Activated CD4-positive, alpha-beta T cell treated with anti-CD3 and anti-CD28 coated beads for 36 hours (primary cell): ENCODE measurements at regions of chr1 and their contacts with region 1.

Region 1: DNA sequence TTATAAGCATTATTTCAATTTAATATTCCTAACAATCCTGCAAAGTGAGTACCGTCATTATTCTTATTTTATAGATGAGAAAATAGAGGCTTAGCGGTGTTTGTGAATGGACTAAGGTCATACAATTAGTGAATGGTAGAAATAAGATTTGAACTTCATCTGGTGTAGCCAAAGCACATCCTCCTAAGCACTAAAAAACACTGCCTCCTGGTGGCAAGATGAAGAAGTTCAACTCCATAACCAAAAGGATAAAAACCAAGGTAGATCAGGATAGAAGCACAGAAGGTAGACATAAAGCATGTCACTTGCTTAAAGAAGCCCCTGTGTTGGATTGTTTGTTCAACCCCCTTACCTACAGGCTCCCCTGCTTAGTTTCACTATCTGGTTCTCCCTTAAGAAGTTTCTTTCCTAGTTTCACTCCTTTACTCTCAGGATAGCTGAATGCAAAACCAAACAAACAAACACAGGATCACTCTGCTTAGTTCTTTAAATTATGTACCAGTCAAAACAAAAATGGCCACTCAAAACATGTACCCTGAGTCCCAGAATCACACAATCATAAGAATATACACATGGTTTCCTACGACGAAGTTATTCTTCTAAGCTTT is 12.7 kb upstream of the AIM2 start:
- DNase-seq: no peak
- ATAC-seq: peak; percentile 37
- H3K4me3 Mint-ChIP-seq: no peak overlapping the region
- H3K27ac Mint-ChIP-seq: peak overlapping the region; percentile 78
- H3K4me1 Mint-ChIP-seq: peaks cover 51% of the 10 kb centered on the region
- H3K27me3 Mint-ChIP-seq: peaks cover 2% of the 10 kb centered on the region

Region 2: GRCh38 chr1:159122005-159122621 is 32.8 kb after region 1 on chr1:
- CTCF ChIA-PET with region 1: interaction called, 8 read pairs
- POLR2A ChIA-PET with region 1: no interaction called
- intact Hi-C with region 1: loop called in 1 of 2 experiments (anchors 2 kb)
- DNase-seq: no peak
- ATAC-seq: peak; percentile 70
- H3K4me3 Mint-ChIP-seq: no peak overlapping the region
- H3K27ac Mint-ChIP-seq: no peak overlapping the region
- H3K4me1 Mint-ChIP-seq: peaks cover 15% of the 10 kb centered on the region
- H3K27me3 Mint-ChIP-seq: peaks cover 33% of the 10 kb centered on the region